Transverse colon (tissue), 4 donors: ENCODE measurements at regions of chr15 and their contacts with region 1.

Region 1: GRCh38 chr15:100152463-100152862 is 189.3 kb downstream of the ADAMTS17 start:
- DNase-seq: no peak
- H3K4me3 ChIP-seq: no peak overlapping the region
- H3K27ac ChIP-seq: no peak overlapping the region
- H3K4me1 ChIP-seq: no peaks in the 10 kb centered on the region
- H3K27me3 ChIP-seq: no peaks in the 10 kb centered on the region
- CTCF ChIP-seq: no peak
- EP300 ChIP-seq: no peak
- POLR2A ChIP-seq: no peak

Region 2: GRCh38 chr15:100093211-100094126 is 59.0 kb before region 1 on chr15:
- in situ Hi-C with region 1: loop called in 1 of 4 experiments (anchors 5 kb)
- intact Hi-C with region 1: no loop called
- DNase-seq: no peak
- H3K4me3 ChIP-seq: no peak overlapping the region
- H3K27ac ChIP-seq: no peak overlapping the region
- H3K4me1 ChIP-seq: no peaks in the 10 kb centered on the region
- H3K27me3 ChIP-seq: no peaks in the 10 kb centered on the region
- CTCF ChIP-seq: no peak
- EP300 ChIP-seq: no peak
- POLR2A ChIP-seq: no peak

Region 3: DNA sequence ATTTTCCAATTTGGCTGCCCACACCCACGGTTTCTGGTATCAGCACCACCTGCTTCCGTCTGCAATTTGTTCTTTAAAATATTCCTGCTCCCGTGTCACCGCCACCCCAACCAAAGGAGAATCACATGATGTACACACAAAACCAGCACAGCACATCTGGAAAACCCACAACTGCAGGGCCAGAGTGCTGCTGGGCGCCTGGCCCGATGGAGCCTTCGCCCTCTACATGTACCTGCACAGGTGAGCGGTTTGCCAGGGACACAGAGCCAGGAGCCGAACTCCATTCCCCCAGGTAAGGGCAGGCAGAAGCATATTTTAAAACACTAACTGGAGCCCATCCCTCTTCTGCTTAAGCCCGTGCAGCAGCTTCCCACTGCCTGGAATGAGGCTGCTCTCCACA is 113.7 kb after region 1 on chr15:
- in situ Hi-C with region 1: no loop called
- intact Hi-C with region 1: no loop called
- DNase-seq: no peak
- H3K4me3 ChIP-seq: no peak overlapping the region
- H3K27ac ChIP-seq: no peak overlapping the region
- H3K4me1 ChIP-seq: no peaks in the 10 kb centered on the region
- H3K27me3 ChIP-seq: no peaks in the 10 kb centered on the region
- CTCF ChIP-seq: no peak
- EP300 ChIP-seq: no peak
- POLR2A ChIP-seq: no peak